ENCODE measurements at regions of chr3 and their contacts with region 1.

Region 1: DNA sequence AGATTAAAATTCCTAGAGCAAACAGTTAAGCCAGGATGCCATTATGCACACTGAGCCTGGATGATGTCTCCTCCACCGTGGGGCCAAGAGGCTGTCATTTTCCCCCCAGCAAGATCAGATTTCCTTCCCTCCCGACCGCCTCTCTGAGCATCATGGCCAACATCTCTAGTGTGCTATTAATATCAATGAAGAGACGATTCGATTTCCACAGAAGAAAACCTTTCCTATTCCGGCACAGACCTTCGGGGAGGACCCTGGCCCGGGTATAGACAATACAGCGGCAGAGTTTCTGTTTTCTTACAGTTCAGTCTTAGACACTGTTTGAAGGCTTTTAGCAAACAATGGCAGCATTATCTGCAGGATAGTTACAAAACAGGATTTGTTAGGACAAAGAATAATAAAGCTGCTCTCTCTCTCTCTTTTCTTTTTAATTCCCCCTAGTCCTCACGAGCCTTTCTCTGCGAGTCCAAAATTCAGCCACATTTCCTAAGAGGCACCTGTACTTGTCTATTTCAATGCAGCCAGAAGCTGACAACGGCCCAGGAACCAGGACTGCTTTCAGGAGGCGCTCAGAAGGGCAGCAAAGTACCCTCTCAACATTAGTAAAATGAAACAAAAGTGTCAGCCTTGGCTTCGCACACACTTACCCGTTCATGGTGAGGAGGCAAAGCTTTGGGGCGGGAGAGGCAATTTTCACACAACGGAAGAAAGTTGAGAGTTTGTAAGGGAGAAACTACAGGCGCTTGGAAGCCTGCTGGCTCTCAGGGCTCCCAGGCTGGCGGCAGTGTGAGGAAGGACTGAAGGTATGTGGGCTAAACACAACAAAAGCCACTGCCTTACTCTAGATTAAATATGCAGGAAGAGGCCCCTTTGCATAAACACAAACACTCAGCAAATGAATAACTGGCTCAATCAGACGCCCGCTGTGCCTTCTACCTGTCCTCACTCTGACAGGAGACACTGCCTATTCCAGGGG is 278.0 kb downstream of the FOXP1 start:
- DNase-seq: peak; percentile 13
- H3K4me3 Mint-ChIP-seq: peak overlapping the region; percentile 89
- H3K27ac Mint-ChIP-seq: peak overlapping the region; percentile 87
- H3K4me1 Mint-ChIP-seq: peaks cover 81% of the 10 kb centered on the region
- H3K27me3 Mint-ChIP-seq: no peaks in the 10 kb centered on the region

Region 2: GRCh38 chr3:70856414-70857162 is 448.9 kb before region 1 on chr3:
- intact Hi-C with region 1: loop called (anchors 5 kb)
- DNase-seq: no peak
- H3K4me3 Mint-ChIP-seq: no peak overlapping the region
- H3K27ac Mint-ChIP-seq: peak overlapping the region; percentile 45
- H3K4me1 Mint-ChIP-seq: peaks cover 28% of the 10 kb centered on the region
- H3K27me3 Mint-ChIP-seq: peaks cover 26% of the 10 kb centered on the region

Region 3: DNA sequence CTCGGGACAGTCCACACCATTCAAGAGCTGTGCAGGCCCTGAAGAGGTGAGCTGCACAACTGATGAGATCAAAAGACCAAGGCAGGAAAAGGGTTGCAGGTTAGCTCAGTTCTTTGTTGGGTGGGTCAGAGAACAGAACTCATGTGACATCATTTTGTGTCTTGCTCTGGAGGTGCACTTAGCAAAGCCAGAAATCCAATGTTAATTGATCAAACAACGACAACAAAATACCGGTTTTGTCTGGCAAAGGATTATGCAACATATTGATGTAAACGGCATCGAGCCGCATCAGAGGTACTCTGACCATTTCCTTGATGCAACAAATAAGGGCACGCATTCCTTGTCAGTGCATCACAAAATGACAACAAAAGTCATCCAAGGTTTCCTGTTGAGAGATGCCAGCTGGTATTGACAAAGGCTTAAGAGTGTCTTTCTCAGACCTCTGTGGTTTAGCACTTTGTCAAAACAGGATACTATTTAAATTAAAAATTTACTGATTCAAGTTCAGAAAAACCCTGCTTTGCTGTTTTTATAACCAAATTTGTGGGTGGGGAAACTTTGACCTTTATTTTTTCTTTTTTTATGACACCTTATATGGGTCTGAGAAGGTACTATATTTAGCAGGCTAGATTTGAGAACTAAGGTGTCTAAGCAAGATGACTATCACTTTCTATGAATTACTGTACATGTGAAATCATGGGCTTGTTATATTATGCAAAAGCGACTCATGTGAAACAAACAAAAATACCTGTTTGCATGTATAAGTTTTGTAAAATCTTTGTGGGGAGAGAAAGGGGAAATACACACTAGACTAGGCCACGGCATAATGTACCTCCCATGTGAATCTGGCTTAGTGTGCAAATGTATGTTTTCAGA is 218.1 kb before region 1 on chr3:
- intact Hi-C with region 1: loop called (anchors 1 kb)
- DNase-seq: peak; percentile 31
- H3K4me3 Mint-ChIP-seq: peak overlapping the region; percentile 4
- H3K27ac Mint-ChIP-seq: peak overlapping the region; percentile 80
- H3K4me1 Mint-ChIP-seq: peaks cover 74% of the 10 kb centered on the region
- H3K27me3 Mint-ChIP-seq: no peaks in the 10 kb centered on the region

Region 4: DNA sequence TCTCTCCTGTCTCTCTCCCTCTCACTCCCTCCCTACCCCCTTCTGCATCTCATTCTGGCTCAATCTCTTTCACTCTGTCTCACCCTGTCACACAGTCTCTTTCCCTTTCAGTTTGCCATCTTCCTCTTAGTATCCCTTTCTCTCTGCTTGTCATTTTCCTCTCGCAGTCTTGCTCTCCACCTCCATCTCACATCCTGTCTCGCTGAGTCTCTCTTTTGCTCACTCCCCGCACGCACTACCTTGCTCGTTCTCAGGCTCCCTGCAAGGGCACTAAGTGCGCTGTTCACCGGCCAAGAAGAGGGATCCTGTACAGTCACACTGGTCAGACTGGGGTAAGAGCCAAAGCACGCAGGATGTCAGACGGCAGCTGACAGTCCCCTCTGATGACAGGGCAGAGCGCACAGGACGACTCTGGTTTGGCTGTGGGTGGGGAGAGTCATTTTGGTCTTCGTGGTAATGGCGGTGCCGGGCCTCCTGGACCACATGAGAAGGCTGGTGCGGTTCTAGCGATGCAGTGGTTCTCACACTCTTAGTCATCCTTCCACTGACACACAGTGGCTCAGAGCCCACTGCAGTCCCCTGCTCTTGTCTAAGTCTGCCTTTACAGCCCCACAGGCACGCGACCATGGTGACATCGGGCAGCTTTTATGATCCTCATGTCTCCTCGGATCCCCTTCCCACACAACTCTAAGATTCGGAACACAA is 78.8 kb before region 1 on chr3:
- intact Hi-C with region 1: loop called (anchors 1 kb)
- DNase-seq: peak; percentile 86
- H3K4me3 Mint-ChIP-seq: peak overlapping the region; percentile 88
- H3K27ac Mint-ChIP-seq: peak overlapping the region; percentile 97
- H3K4me1 Mint-ChIP-seq: peaks cover 63% of the 10 kb centered on the region
- H3K27me3 Mint-ChIP-seq: peaks cover 1% of the 10 kb centered on the region

Region 5: DNA sequence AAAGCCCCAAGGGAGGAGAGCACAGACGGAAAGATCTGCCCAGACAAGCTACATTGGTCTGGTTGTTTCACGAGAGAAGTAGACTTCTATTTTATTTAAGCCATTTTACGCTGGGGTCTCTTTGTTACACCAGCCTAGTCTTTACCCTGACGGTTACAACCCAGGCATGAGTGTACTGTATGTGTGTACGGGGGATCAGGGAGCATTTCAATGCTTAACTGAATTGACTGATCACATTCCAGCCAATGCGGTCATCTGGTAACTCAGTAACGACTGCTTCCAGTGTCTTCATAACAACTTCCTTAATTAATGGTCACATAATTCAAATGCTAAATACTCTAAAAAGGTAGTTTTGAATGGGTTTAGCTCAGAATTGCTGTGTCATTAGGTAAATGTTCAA is 10.6 kb before region 1 on chr3:
- intact Hi-C with region 1: no loop called
- DNase-seq: no peak
- H3K4me3 Mint-ChIP-seq: no peak overlapping the region
- H3K27ac Mint-ChIP-seq: no peak overlapping the region
- H3K4me1 Mint-ChIP-seq: peaks cover 33% of the 10 kb centered on the region
- H3K27me3 Mint-ChIP-seq: no peaks in the 10 kb centered on the region

Region 6: GRCh38 chr3:71389911-71390573 is 84.5 kb after region 1 on chr3:
- intact Hi-C with region 1: loop called (anchors 1 kb)
- DNase-seq: peak; percentile 20
- H3K4me3 Mint-ChIP-seq: peak overlapping the region; percentile 62
- H3K27ac Mint-ChIP-seq: peak overlapping the region; percentile 81
- H3K4me1 Mint-ChIP-seq: peaks cover 55% of the 10 kb centered on the region
- H3K27me3 Mint-ChIP-seq: no peaks in the 10 kb centered on the region

Region 7: GRCh38 chr3:71487418-71487817 is 181.9 kb after region 1 on chr3:
- intact Hi-C with region 1: loop called (anchors 2 kb)
- DNase-seq: no peak
- H3K4me3 Mint-ChIP-seq: peak overlapping the region; percentile 71
- H3K27ac Mint-ChIP-seq: peak overlapping the region; percentile 91
- H3K4me1 Mint-ChIP-seq: peaks cover 71% of the 10 kb centered on the region
- H3K27me3 Mint-ChIP-seq: no peaks in the 10 kb centered on the region

Region 8: DNA sequence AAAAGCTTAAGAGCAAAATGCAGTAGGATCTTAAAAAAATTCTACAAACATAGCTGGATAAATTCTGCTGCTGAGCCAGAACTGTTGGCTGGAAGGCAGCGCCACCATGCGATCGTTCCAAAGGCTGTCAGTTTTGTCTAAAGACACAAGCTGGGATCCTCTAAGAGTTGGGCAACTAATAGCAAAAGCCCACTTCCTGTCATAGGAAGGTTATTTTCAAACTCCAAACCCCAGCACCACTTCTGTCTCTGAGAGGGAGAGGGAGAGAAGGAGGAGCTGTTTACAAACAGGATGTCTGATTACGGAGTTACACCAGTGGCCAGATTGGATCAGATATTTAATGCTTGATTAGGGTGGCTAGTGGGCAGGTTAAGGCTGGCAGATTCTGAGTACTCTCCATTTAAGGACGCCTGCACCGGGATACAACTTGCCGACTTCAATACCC is 375.7 kb after region 1 on chr3:
- intact Hi-C with region 1: loop called (anchors 10 kb)
- DNase-seq: no peak
- H3K4me3 Mint-ChIP-seq: no peak overlapping the region
- H3K27ac Mint-ChIP-seq: no peak overlapping the region
- H3K4me1 Mint-ChIP-seq: peaks cover 13% of the 10 kb centered on the region
- H3K27me3 Mint-ChIP-seq: no peaks in the 10 kb centered on the region